Colonic mucosa (tissue), 4 donors: ENCODE measurements at regions of chr18 and their contacts with region 1.

Region 1: GRCh38 chr18:63823518-63824219 is 48.5 kb downstream of the SERPINB7 start:
- DNase-seq: peak; percentile 31
- H3K4me3 ChIP-seq: no peak overlapping the region
- H3K27ac ChIP-seq: no peak overlapping the region
- H3K4me1 ChIP-seq: no peaks in the 10 kb centered on the region
- H3K27me3 ChIP-seq: no peaks in the 10 kb centered on the region
- CTCF ChIP-seq: peak; percentile 41

Region 2: GRCh38 chr18:63987743-63988142 is 164.1 kb after region 1 on chr18:
- intact Hi-C with region 1: loop called (anchors 5 kb)
- DNase-seq: no peak
- H3K4me3 ChIP-seq: no peak overlapping the region
- H3K27ac ChIP-seq: no peak overlapping the region
- H3K4me1 ChIP-seq: no peaks in the 10 kb centered on the region
- H3K27me3 ChIP-seq: no peaks in the 10 kb centered on the region
- CTCF ChIP-seq: no peak